CD8-positive, alpha-beta memory T cell (primary cell): ENCODE measurements at regions of chr7 and their contacts with region 1.

Region 1: GRCh38 chr7:16564909-16565426 is 38.3 kb downstream of the LRRC72 start:
- DNase-seq: peak in 2 of 5 donors; percentile 34 to 46
- H3K4me3 ChIP-seq: no peak overlapping the region
- H3K4me3 Mint-ChIP-seq: peak overlapping the region in 3 of 7 donors; percentile 17 to 39 (median 18)
- H3K27ac ChIP-seq: no peak overlapping the region
- H3K27ac Mint-ChIP-seq: no peak overlapping the region
- H3K4me1 ChIP-seq: peaks cover 17% of the 10 kb centered on the region
- H3K4me1 Mint-ChIP-seq: peaks cover 15 to 25% (median 20%) of the 10 kb centered on the region in 3 donors
- H3K27me3 ChIP-seq: no peaks in the 10 kb centered on the region
- H3K27me3 Mint-ChIP-seq: peaks cover 5 to 24% of the 10 kb centered on the region in 2 donors

Region 2: GRCh38 chr7:16078076-16078952 is 486.7 kb before region 1 on chr7:
- CTCF ChIA-PET with region 1: interaction called, 16 read pairs
- POLR2A ChIA-PET with region 1: no interaction called
- DNase-seq: peak in 2 of 5 donors; percentile 9 to 32
- H3K4me3 ChIP-seq: no peak overlapping the region
- H3K4me3 Mint-ChIP-seq: no peak overlapping the region
- H3K27ac ChIP-seq: no peak overlapping the region
- H3K27ac Mint-ChIP-seq: no peak overlapping the region
- H3K4me1 ChIP-seq: no peaks in the 10 kb centered on the region
- H3K4me1 Mint-ChIP-seq: peaks cover 6 to 10% (median 8%) of the 10 kb centered on the region in 3 donors
- H3K27me3 ChIP-seq: no peaks in the 10 kb centered on the region
- H3K27me3 Mint-ChIP-seq: no peaks in the 10 kb centered on the region

Region 3: GRCh38 chr7:16431646-16432424 is 133.1 kb before region 1 on chr7:
- CTCF ChIA-PET with region 1: interaction called, 41 read pairs
- POLR2A ChIA-PET with region 1: no interaction called
- DNase-seq: peak in 3 of 5 donors; percentile 7 to 49 (median 30)
- H3K4me3 ChIP-seq: no peak overlapping the region
- H3K4me3 Mint-ChIP-seq: no peak overlapping the region
- H3K27ac ChIP-seq: no peak overlapping the region
- H3K27ac Mint-ChIP-seq: no peak overlapping the region
- H3K4me1 ChIP-seq: no peaks in the 10 kb centered on the region
- H3K4me1 Mint-ChIP-seq: peaks cover 0 to 8% (median 7%) of the 10 kb centered on the region in 3 donors
- H3K27me3 ChIP-seq: no peaks in the 10 kb centered on the region
- H3K27me3 Mint-ChIP-seq: peaks cover 0 to 5% of the 10 kb centered on the region in 2 donors

Region 4: GRCh38 chr7:16739863-16740622 is 175.1 kb after region 1 on chr7:
- CTCF ChIA-PET with region 1: no interaction called
- POLR2A ChIA-PET with region 1: no interaction called
- DNase-seq: no peak
- H3K4me3 ChIP-seq: no peak overlapping the region
- H3K4me3 Mint-ChIP-seq: no peak overlapping the region
- H3K27ac ChIP-seq: no peak overlapping the region
- H3K27ac Mint-ChIP-seq: peak overlapping the region in 1 of 8 donors; percentile 4
- H3K4me1 ChIP-seq: no peaks in the 10 kb centered on the region
- H3K4me1 Mint-ChIP-seq: no peaks in the 10 kb centered on the region
- H3K27me3 ChIP-seq: no peaks in the 10 kb centered on the region
- H3K27me3 Mint-ChIP-seq: peaks cover 0 to under 1% of the 10 kb centered on the region in 2 donors